ENCODE measurements at regions of chr10 and their contacts with region 1.

Region 1: DNA sequence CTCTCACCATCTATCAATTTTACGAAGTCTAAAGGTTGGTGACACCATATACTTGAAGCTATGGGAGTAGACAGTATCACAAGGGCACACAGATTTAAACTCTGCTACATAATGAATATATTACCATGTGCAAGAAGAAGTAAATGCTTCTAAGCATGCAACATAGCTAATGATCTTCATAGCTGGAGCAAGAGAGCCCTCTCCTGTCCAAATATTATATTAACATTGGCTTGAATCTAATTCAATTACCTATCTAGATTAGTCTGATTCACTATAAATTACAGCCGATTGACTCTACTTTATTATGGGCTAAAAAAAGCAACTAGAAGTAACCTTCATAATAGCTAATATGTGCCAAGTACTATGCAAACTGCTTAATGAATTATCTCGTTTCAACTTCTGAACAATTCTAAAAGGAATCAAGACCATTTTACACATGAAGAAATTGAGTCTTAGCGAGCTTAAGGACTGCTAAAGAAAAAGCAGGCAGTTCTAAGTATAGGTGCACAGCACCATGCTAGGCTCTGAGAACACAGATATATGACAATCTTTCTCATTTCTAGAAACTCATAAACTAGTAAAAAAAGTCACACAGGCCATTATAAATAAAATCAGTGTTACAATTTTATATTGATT is 21.9 kb downstream of the FRA10AC1 start:
- DNase-seq: peak; percentile 27 to 68 (median 44)
- H3K4me3 ChIP-seq: no peak overlapping the region
- H3K4me3 Mint-ChIP-seq: no peak overlapping the region
- H3K27ac ChIP-seq: no peak overlapping the region
- H3K27ac Mint-ChIP-seq: no peak overlapping the region
- H3K4me1 ChIP-seq: no peaks in the 10 kb centered on the region
- H3K4me1 Mint-ChIP-seq: no peaks in the 10 kb centered on the region
- H3K27me3 ChIP-seq: no peaks in the 10 kb centered on the region
- H3K27me3 Mint-ChIP-seq: peaks cover 0 to 2% (median 0%) of the 10 kb centered on the region in 3 donors
- CTCF ChIP-seq: peak; percentile 79

Region 2: GRCh38 chr10:93554760-93555432 is 125.6 kb before region 1 on chr10:
- intact Hi-C with region 1: loop called (anchors 2 to 5 kb)
- DNase-seq: peak; percentile 83 to 88 (median 85)
- H3K4me3 ChIP-seq: peak overlapping the region in 2 of 3 experiments; percentile 15 to 61
- H3K4me3 Mint-ChIP-seq: peak overlapping the region; percentile 72 to 83
- H3K27ac ChIP-seq: peak overlapping the region; percentile 85 to 92
- H3K27ac Mint-ChIP-seq: peak overlapping the region; percentile 91 to 97 (median 96)
- H3K4me1 ChIP-seq: peaks cover 25 to 40% of the 10 kb centered on the region in 2 donors
- H3K4me1 Mint-ChIP-seq: peaks cover 38% of the 10 kb centered on the region
- H3K27me3 ChIP-seq: no peaks in the 10 kb centered on the region
- H3K27me3 Mint-ChIP-seq: peaks cover 0 to 6% (median 2%) of the 10 kb centered on the region in 3 donors
- CTCF ChIP-seq: peak; percentile 88